Calu3 (cell line): ENCODE measurements at regions of chr3 and their contacts with region 1.

Region 1: GRCh38 chr3:20225769-20226168 is 39.8 kb upstream of the SGO1 start:
- DNase-seq: peak; percentile 7
- H3K4me3 Mint-ChIP-seq: no peak overlapping the region
- H3K27ac Mint-ChIP-seq: no peak overlapping the region
- H3K4me1 Mint-ChIP-seq: no peaks in the 10 kb centered on the region
- H3K27me3 Mint-ChIP-seq: no peaks in the 10 kb centered on the region
- CTCF ChIP-seq: no peak

Region 2: DNA sequence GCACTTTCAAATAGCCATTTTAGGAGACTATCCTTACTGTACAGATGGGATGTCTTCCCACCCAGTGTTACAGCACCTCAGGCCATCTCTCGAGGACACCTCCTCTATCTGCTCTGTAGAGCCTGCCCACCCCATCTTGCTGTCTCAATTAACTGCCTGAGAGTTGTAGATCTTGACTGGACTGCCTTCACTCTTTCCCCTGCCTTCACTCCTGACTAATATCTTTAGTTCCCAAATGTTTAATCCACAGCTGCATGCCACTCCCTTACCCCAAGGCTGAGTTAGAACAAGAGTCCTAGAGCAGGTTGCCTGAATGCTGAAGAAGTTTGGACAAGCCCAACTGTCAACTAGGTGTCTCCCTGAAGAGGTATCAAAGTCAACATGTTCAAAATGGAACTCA is 212.4 kb before region 1 on chr3:
- CTCF ChIA-PET with region 1: no interaction called
- intact Hi-C with region 1: no loop called
- DNase-seq: no peak
- H3K4me3 Mint-ChIP-seq: no peak overlapping the region
- H3K27ac Mint-ChIP-seq: no peak overlapping the region
- H3K4me1 Mint-ChIP-seq: no peaks in the 10 kb centered on the region
- H3K27me3 Mint-ChIP-seq: no peaks in the 10 kb centered on the region
- CTCF ChIP-seq: no peak

Region 3: GRCh38 chr3:20264934-20265567 is 39.3 kb after region 1 on chr3:
- CTCF ChIA-PET with region 1: no interaction called
- intact Hi-C with region 1: no loop called
- DNase-seq: no peak
- H3K4me3 Mint-ChIP-seq: no peak overlapping the region
- H3K27ac Mint-ChIP-seq: peak overlapping the region; percentile 6
- H3K4me1 Mint-ChIP-seq: peaks cover 9% of the 10 kb centered on the region
- H3K27me3 Mint-ChIP-seq: no peaks in the 10 kb centered on the region
- CTCF ChIP-seq: no peak

Region 4: DNA sequence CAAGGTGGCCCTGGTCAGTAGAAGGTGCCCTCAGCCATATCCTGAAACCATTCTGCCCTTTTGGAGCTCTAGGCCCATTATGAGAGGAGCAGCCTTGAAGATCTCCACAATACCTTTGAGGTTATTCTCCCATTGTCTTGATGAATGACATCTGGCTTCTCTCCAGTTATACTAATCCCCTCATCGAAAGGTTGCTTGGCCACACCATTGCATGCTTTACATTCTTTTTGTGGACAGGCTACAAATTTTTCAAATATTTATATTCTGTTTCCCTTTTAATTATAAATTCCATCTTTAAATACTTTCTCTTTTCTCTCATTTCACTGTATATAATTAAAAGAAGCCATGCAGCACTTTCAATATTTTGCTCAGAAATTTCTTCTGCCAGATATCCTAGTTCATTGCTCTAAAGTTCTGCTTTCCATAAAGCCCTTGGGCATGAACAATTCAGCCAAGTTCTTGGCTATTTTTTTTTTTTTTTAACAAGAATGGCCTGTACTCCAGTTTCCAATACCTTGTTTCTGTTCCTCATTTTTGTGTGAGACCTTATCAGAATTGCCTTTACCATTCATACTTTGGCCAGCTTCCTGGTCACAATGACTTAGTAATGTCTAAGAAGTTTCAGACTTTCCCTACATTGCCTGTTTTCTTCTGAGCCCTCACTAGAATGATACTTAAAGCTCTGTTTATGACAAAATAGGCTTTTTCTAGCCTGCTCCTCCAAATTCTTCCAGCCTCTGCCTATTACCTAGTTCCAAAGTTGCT is 99.1 kb after region 1 on chr3:
- CTCF ChIA-PET with region 1: no interaction called
- intact Hi-C with region 1: loop called (anchors 5 kb)
- DNase-seq: no peak
- H3K4me3 Mint-ChIP-seq: no peak overlapping the region
- H3K27ac Mint-ChIP-seq: peak overlapping the region; percentile 74
- H3K4me1 Mint-ChIP-seq: peaks cover 25% of the 10 kb centered on the region
- H3K27me3 Mint-ChIP-seq: no peaks in the 10 kb centered on the region
- CTCF ChIP-seq: no peak

Region 5: DNA sequence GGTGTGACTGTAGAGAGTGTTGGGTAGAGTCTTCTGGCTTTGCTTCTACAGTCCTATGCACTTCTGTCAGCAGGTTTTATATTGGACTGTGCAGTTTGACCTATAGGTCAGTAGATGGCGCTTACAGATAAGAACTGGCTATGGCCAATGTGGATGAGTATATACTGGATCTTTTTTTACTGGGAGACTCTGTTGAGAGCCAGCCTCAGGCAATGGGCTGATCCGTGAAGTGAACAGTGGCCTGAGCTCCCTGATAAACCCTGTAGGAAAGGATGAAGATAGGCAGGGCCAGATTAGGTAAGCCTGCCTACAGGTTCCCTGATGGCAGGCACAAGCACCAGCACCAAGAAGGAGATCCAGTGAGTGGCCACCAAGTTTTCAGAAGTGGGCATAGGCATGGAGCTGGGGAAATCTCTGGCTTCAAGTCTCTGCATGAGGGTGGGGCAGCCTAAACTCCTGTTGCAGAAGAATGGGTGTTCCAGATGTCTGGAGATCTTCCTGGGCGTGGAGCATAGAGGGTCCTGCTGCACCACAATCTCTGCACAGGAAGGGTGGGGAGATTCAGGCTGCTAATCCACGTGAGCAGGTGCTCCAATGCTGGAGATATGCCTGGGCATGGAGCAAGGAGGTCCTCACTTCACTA is 286.2 kb after region 1 on chr3:
- CTCF ChIA-PET with region 1: no interaction called
- intact Hi-C with region 1: loop called (anchors 5 kb)
- DNase-seq: peak; percentile 12
- H3K4me3 Mint-ChIP-seq: no peak overlapping the region
- H3K27ac Mint-ChIP-seq: no peak overlapping the region
- H3K4me1 Mint-ChIP-seq: peaks cover 8% of the 10 kb centered on the region
- H3K27me3 Mint-ChIP-seq: no peaks in the 10 kb centered on the region
- CTCF ChIP-seq: peak; percentile 39

Region 6: GRCh38 chr3:20930034-20930433 is 704.3 kb after region 1 on chr3:
- CTCF ChIA-PET with region 1: no interaction called
- intact Hi-C with region 1: loop called (anchors 2 kb)
- DNase-seq: peak; percentile 45
- H3K4me3 Mint-ChIP-seq: no peak overlapping the region
- H3K27ac Mint-ChIP-seq: no peak overlapping the region
- H3K4me1 Mint-ChIP-seq: peaks cover 19% of the 10 kb centered on the region
- H3K27me3 Mint-ChIP-seq: no peaks in the 10 kb centered on the region
- CTCF ChIP-seq: peak; percentile 27

Region 7: GRCh38 chr3:21894459-21895340 is 1668.9 kb after region 1 on chr3:
- CTCF ChIA-PET with region 1: no interaction called
- intact Hi-C with region 1: loop called (anchors 1 kb)
- DNase-seq: peak; percentile 17
- H3K4me3 Mint-ChIP-seq: no peak overlapping the region
- H3K27ac Mint-ChIP-seq: no peak overlapping the region
- H3K4me1 Mint-ChIP-seq: no peaks in the 10 kb centered on the region
- H3K27me3 Mint-ChIP-seq: no peaks in the 10 kb centered on the region
- CTCF ChIP-seq: peak; percentile 30